ENCODE measurements at regions of chr3 and their contacts with region 1.

Region 1: DNA sequence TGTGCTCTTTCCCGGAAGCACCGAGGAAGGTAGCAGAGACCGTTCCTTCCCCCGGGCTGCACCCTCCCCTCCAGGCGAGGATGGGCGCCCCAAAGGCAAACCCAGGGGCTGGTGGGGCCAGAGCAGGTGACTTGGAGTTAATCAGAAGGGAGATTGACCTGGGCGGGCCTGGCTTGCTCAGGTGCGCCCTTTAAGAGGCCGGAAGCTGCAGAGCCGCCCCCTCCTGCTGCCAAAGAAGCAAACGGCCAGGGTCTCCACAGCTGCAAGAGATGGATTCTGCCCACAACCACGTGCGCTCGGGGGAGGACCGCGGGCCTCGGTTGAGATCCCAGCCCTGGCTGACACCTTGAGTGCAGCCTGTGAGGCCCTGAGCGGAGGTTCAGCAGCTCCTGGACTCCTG is 218.2 kb upstream of the NAALADL2 start:
- DNase-seq: no peak
- ATAC-seq: no peak
- H3K4me3 ChIP-seq: no peak overlapping the region
- H3K27ac ChIP-seq: no peak overlapping the region
- H3K4me1 ChIP-seq: no peaks in the 10 kb centered on the region
- H3K27me3 ChIP-seq: no peaks in the 10 kb centered on the region
- CTCF ChIP-seq: no peak

Region 2: DNA sequence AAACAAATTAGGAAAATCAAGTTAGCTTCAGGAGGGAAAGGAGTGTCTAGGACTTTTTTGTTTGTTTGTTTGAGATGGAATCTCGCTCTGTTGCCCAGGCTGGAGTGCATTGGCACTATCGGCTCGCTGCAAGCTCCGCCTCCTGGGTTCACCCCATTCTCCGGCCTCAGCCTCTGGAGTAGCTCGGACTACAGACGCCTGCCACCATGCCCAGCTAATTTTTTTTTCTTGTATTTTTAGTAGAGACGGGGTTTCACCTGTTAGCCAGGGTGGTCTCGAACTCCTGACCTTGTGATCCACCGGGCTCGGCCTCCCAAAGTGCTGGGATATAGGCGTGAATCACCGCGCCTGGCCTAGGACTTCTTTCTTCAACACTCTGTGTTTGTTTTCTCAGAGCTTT is 1072.3 kb before region 1 on chr3:
- intact Hi-C with region 1: loop called in 1 of 10 experiments (anchors 5 kb)
- DNase-seq: no peak
- ATAC-seq: no peak
- H3K4me3 ChIP-seq: no peak overlapping the region
- H3K27ac ChIP-seq: no peak overlapping the region
- H3K4me1 ChIP-seq: no peaks in the 10 kb centered on the region
- H3K27me3 ChIP-seq: no peaks in the 10 kb centered on the region
- CTCF ChIP-seq: no peak